Left colon (tissue), 2 donors: ENCODE measurements at regions of chr14 and their contacts with region 1.

Region 1: DNA sequence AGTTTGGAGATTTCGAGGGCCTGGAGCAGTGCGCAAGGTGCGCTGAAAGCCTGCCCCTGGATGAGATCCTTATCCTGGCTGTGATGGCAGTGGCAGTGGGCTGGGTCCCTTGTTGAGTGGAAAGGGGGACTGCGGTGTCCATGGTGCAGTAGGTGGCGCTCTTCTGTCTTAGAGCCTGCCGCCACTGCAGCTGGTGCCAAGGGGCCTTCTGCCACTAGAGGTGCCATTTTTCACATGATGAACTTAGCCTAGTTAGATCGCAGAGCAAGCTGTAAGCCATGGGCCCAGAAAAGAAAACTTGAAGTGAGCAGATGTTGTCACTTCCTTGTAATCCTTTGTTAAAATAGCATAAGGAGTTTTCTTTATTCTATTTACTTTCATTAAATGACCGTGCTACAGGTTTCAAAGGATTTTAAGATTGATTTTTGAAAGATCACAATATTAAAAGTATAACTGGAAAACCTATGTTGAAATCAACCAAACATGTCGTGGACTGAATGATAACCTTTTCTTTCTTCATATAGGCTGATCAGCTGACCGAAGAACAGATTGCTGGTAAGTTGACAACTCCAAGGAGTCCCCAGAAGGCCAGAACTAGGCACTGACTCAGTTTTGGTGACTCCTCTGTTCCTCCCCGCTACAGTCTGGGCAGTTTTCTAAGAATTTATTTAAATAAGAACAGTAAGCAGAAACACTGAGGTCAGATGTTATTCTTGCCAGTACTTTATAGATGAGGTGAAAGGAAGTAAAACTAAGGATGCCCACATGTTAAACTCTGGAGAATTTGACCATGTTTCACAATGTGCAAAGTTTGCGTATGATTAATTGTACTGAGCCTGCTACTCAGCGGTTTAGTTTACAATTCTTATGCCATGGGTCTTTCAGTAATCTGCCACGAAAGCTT is 3.0 kb downstream of the CALM1 start:
- DNase-seq: peak; percentile 90 to 94
- ATAC-seq: peak; percentile 62

Region 2: GRCh38 chr14:88879022-88879421 is 1520.8 kb before region 1 on chr14:
- intact Hi-C with region 1: no loop called
- DNase-seq: no peak
- ATAC-seq: no peak

Region 3: GRCh38 chr14:90518941-90519256 is 119.1 kb after region 1 on chr14:
- intact Hi-C with region 1: loop called in 1 of 2 experiments (anchors 10 kb)
- DNase-seq: peak; percentile 46 to 69
- ATAC-seq: peak; percentile 33

Region 4: DNA sequence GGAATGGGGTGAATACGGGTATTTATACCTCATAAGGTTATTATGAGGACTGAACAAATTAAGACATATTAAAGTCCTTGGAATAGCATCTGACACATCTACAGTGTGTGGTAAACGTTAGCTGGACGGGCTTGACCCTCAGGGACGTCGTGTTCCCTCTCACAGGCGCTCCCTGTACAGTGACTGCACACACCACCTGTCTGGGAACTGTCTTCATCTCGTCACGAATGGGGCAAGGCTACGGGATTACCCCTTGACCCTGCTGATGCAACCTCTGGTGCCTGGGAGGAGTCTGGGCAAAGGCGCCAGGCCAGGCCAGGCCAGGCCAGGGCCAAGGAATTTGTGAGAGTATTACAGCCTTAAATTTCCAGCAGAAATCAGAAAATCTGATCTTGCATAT is 188.1 kb after region 1 on chr14:
- intact Hi-C with region 1: no loop called
- DNase-seq: no peak
- ATAC-seq: no peak

Region 5: DNA sequence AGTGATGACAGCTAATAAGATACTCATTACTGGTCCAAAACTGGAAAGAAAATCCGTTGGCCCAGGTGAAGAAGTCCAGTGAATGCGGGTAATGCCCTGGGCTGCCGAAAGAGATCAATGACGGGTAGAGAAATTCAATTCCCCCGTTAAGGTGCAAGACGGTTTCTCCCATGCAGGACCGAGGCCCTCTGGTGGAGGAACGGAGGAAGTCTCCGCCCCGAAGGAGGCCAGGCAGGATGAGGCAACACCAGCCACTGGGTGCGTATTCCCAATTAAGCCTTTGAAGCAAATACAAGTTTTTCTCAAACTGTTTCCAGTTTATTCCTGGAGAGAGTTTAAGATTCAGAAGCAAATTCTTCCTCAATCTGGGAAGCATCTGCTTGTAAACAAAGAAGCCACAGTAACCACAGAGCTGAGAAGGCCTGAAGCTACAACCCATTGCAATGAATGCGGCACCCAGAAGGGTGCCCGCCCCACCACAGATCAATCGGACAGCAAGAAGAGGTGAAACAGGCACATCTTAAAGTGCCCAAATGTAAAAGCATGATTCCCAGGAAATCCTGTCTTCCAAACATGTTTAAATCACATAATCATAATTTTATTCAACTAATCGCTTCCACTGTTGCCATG is 297.9 kb after region 1 on chr14:
- intact Hi-C with region 1: loop called in 1 of 2 experiments (anchors 10 kb)
- DNase-seq: peak; percentile 77 to 78
- ATAC-seq: peak; percentile 98